Panc1 (cell line): ENCODE measurements at regions of chr5 and their contacts with region 1.

Region 1: DNA sequence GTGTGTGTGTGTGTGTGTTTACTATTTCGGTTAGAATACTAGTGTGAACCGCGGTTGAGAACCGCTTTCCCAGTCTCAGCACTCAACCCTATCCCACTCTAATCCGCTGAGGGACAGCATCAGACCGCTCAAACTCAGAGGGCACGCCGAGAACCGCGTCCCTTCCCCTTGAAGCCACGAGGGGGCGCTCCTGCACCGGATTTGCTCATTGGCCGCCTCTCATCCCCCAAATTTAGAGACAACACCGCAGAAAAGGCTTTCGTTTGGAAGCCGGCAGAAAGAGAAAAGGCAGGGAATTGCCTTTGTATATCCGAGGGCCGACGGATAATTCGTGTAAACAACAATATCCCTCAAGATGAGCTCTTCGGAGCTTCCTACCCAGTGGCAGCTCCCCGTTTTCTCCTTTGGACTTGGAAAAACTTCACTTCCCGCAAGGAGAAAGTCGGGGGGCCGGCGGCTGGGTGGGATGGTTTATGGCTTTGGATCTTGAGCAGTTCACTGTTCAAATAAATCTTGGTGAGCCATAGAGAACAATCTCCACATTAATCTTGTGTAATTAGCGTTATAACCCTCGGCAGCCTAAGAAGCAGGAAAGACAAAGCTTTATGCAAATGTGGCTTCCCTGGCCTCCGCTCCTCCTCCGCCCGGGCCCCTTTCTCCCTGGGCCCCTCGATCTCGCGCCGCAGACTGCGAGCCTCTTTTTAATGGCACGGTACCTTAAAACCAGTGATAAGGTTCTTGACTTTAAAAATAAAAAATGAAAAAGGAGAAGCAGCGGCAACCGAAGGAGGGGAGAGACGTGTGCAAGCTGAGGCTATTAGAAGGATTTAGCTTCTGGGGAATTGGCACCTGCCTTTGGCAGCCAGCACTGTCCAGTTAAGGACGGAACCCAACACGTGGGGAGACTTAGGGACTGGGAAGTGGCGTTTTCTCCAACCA is 296.8 kb downstream of the PARP8 start:
- DNase-seq: peak; percentile 61
- ATAC-seq: peak; percentile 93
- H3K4me3 ChIP-seq: peak overlapping the region; percentile 34 to 57
- H3K27ac ChIP-seq: no peak overlapping the region
- H3K4me1 ChIP-seq: 0 out of 2 replicates have a peak, but pooled peaks cover 4% of the 10 kb centered on the region
- H3K27me3 ChIP-seq: peaks cover 20% of the 10 kb centered on the region
- CTCF ChIP-seq: peak; percentile 99

Region 2: GRCh38 chr5:50302815-50303490 is 660.2 kb before region 1 on chr5:
- CTCF ChIA-PET with region 1: no interaction called
- POLR2A ChIA-PET with region 1: no interaction called
- in situ Hi-C with region 1: no loop called
- intact Hi-C with region 1: no loop called
- DNase-seq: peak; percentile 90
- ATAC-seq: peak; percentile 100
- H3K4me3 ChIP-seq: peak overlapping the region in 1 of 2 experiments; percentile 21; a peak in 1 of 4 replicates
- H3K27ac ChIP-seq: peak overlapping the region; percentile 79
- H3K4me1 ChIP-seq: peaks cover 8% of the 10 kb centered on the region; the same call in 1 of the 2 replicates
- H3K27me3 ChIP-seq: no peaks in the 10 kb centered on the region
- CTCF ChIP-seq: no peak

Region 3: DNA sequence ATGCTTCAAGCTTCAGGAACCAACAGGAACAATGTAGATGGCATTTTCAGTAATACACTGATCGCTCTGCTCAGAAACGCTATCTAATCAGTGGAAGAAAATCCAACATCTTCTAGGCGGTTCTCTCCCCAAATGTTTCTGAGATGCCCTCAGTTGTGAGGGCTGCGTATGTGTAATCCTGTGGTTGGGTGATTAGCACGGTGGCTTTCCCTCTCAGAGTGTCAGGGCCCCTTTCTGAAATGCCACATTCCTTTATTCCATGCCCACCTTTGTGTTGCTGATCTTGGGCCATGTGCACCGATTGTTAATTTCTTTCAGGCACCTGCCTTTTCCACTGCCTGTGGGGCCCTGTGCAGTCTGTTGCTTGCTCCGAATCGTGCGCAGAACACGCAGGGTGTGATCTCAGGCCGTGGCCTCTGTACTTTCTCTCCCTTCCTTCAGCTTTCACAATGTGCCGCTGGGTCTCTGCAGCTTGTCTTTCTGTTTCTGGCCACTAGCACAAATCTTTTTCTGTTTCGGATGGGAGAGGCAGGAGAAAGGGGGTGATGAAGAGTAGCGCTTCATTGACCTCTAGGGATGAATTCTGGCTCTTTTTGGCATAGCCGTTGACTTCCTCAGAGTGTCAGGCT is 27.2 kb after region 1 on chr5:
- CTCF ChIA-PET with region 1: interaction called, 3 read pairs
- POLR2A ChIA-PET with region 1: no interaction called
- in situ Hi-C with region 1: no loop called
- intact Hi-C with region 1: loop called (anchors 2 kb)
- DNase-seq: no peak
- ATAC-seq: no peak
- H3K4me3 ChIP-seq: no peak overlapping the region
- H3K27ac ChIP-seq: no peak overlapping the region
- H3K4me1 ChIP-seq: no peaks in the 10 kb centered on the region
- H3K27me3 ChIP-seq: no peaks in the 10 kb centered on the region
- CTCF ChIP-seq: no peak

Region 4: DNA sequence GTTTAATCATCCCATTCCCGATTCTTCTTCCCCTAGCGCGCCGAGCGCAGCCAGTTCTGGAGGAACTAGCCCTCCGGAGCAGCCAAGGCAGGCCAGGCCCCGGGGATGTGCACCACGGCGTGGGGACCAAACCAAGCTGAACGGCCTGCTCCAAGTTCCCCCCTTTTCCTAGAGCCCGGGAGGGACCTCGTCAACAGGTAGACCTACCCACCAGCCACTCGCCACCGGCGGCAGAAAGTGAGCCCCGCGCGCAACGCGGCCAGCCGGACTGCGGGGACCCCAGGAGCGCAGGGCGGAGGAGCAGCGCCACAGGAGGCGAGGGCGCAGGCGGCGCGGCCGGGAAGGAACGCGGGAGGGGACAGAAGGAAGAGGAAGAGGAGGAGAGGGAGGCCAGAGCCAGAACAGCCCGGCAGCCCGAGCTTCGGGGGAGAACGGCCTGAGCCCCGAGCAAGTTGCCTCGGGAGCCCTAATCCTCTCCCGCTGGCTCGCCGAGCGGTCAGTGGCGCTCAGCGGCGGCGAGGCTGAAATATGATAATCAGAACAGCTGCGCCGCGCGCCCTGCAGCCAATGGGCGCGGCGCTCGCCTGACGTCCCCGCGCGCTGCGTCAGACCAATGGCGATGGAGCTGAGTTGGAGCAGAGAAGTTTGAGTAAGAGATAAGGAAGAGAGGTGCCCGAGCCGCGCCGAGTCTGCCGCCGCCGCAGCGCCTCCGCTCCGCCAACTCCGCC is 419.7 kb after region 1 on chr5 and contains the start of gene ISL1:
- CTCF ChIA-PET with region 1: interaction called, 3 read pairs
- POLR2A ChIA-PET with region 1: no interaction called
- in situ Hi-C with region 1: no loop called
- intact Hi-C with region 1: loop called (anchors 10 kb)
- DNase-seq: no peak
- ATAC-seq: peak; percentile 90
- H3K4me3 ChIP-seq: peak within 1 kb of the TSS; percentile 38 to 57
- H3K27ac ChIP-seq: no peak within 1 kb of the TSS
- H3K4me1 ChIP-seq: peaks cover 25% of the 10 kb centered on the region
- H3K27me3 ChIP-seq: peaks cover 75% of the 10 kb centered on the region
- CTCF ChIP-seq: no peak
- total RNA-seq, gene ISL1: 0.36 TPM

Region 5: GRCh38 chr5:51960617-51961115 is 997.5 kb after region 1 on chr5:
- CTCF ChIA-PET with region 1: interaction called, 12 read pairs
- POLR2A ChIA-PET with region 1: no interaction called
- in situ Hi-C with region 1: no loop called
- intact Hi-C with region 1: no loop called
- DNase-seq: peak; percentile 12
- ATAC-seq: no peak
- H3K4me3 ChIP-seq: no peak overlapping the region
- H3K27ac ChIP-seq: no peak overlapping the region
- H3K4me1 ChIP-seq: no peaks in the 10 kb centered on the region
- H3K27me3 ChIP-seq: no peaks in the 10 kb centered on the region
- CTCF ChIP-seq: peak; percentile 60; the same call in 1 of the 2 replicates

Region 6: DNA sequence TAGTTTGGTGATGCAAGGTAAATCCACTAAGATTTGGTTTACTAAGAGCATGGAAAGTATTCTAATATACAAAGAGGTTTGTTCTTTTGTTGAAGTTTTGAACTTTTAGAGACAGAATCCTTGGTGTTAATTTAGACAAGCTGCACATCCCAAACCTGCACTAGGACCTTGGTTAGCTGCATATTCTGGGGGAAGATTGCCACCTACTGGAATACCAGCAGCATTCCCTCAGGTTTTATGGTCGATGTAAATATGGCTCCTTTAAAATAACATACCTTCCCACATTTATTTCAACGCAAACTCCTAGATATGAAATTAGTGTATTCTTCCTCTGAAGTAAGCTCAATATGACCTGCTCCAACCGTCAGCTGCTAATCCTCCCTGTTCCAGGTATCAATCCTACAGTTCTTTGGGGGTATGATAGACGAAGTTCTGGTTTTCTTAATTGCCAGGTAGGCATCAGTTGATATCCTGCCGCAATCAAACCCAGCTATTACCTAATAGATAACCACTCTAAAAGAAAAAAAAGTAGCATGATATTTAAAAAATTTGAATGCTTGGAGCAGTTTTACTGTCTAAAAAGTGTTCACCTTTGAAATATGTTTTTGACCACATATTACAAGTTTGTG is 1044.1 kb after region 1 on chr5:
- CTCF ChIA-PET with region 1: interaction called, 14 read pairs
- POLR2A ChIA-PET with region 1: no interaction called
- in situ Hi-C with region 1: no loop called
- intact Hi-C with region 1: loop called (anchors 1 kb)
- DNase-seq: peak; percentile 39
- ATAC-seq: peak; percentile 88; the same call in 1 of the 2 replicates
- H3K4me3 ChIP-seq: no peak overlapping the region
- H3K27ac ChIP-seq: no peak overlapping the region
- H3K4me1 ChIP-seq: no peaks in the 10 kb centered on the region
- H3K27me3 ChIP-seq: no peaks in the 10 kb centered on the region
- CTCF ChIP-seq: peak; percentile 70

Region 7: GRCh38 chr5:52356311-52356918 is 1393.2 kb after region 1 on chr5:
- CTCF ChIA-PET with region 1: no interaction called
- POLR2A ChIA-PET with region 1: no interaction called
- in situ Hi-C with region 1: no loop called
- intact Hi-C with region 1: loop called (anchors 5 kb)
- DNase-seq: peak; percentile 2
- ATAC-seq: no peak
- H3K4me3 ChIP-seq: no peak overlapping the region
- H3K27ac ChIP-seq: no peak overlapping the region
- H3K4me1 ChIP-seq: no peaks in the 10 kb centered on the region
- H3K27me3 ChIP-seq: no peaks in the 10 kb centered on the region
- CTCF ChIP-seq: peak; percentile 77; the same call in 1 of the 2 replicates

Region 8: GRCh38 chr5:52657247-52657645 is 1694.0 kb after region 1 on chr5:
- CTCF ChIA-PET with region 1: no interaction called
- POLR2A ChIA-PET with region 1: interaction called, 3 read pairs
- in situ Hi-C with region 1: no loop called
- intact Hi-C with region 1: loop called (anchors 2 kb)
- DNase-seq: peak; percentile 17
- ATAC-seq: peak; percentile 42; the same call in 1 of the 2 replicates
- H3K4me3 ChIP-seq: no peak overlapping the region
- H3K27ac ChIP-seq: no peak overlapping the region
- H3K4me1 ChIP-seq: no peaks in the 10 kb centered on the region
- H3K27me3 ChIP-seq: peaks cover 7% of the 10 kb centered on the region
- CTCF ChIP-seq: peak; percentile 53; the same call in 1 of the 2 replicates